Activated CD8-positive, alpha-beta T cell treated with anti-CD3 and anti-CD28 coated beads for 36 hours (primary cell): ENCODE measurements at regions of chr1 and their contacts with region 1.

Region 1: DNA sequence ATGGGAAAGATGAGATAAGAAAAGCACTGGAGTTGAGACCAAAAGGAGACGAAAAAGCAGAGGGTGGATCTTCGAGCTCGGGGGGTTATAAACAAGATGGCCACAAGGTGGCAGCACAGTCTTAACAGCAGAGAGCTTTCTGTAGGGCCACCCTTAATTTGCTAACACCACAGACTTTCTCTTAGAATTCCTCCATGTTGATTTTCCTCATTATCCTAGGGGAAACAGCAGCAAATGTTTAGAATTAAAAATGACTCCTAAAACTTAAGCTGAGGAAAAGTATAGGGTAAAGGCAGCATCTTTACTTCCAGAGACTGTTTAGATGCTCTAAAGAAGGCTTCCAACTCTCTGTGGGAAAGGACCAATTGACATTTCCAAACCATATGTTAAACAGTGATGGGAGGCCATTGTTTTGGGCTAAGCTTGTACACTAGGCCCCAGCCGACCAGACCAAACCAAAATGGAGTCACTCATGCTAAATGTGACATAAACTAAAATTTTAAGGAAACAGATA is 2.5 kb upstream of the APOBEC4 start:
- DNase-seq: peak; percentile 87
- ATAC-seq: no peak
- H3K4me3 Mint-ChIP-seq: no peak overlapping the region
- H3K27ac Mint-ChIP-seq: no peak overlapping the region
- H3K4me1 Mint-ChIP-seq: peaks cover 30% of the 10 kb centered on the region
- H3K27me3 Mint-ChIP-seq: no peaks in the 10 kb centered on the region
- CTCF ChIP-seq: peak; percentile 93

Region 2: DNA sequence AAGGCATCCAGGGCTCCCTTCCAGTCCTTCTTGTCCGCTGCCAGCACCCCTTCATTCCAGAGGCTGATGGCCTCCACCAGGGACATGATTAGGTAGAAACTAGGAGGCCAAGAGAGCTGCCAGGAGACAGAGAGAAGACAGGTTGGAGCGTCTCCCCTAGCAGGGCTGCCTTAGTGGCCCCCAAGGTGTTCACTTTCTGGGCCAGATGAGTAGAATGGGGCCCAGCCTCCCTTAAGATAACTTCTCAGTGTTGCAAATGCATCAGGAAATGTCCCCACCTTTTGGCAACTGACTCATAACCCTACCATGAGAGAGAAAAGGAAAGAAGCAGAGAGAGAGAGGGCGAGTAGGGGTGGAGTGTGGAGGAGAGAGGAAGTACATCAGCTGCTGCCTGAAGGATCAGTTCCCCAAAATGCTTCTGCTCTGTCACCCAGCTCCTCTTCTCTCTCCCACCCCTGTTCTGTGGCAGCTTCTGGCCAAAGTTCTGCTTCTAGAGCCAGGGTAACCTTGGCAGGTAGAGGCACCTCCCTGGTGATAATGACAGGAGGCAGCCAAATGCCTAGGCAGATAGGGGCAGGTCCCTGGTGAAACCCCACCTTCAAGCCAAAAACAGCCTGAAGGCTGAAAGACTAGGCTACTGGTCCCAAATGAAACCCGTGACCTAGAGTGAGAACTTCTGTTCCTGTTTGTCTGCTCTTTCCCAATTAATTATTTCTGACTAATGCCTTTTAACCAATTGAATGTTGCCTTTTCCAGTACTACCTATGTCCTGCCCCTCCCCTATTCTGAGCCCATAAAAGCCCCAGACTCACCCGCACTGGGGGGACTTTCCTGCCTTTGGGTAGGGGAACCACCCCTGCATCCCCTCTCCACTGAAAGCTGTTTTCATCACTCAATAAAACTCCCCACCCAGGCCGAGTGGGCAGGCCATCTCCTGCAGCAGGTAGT is 65.1 kb before region 1 on chr1 and contains the start of gene NCF2:
- CTCF ChIA-PET with region 1: no interaction called
- POLR2A ChIA-PET with region 1: no interaction called
- intact Hi-C with region 1: no loop called
- DNase-seq: peak; percentile 77
- ATAC-seq: peak; percentile 92
- H3K4me3 Mint-ChIP-seq: peak within 1 kb of the TSS; percentile 50
- H3K27ac Mint-ChIP-seq: peak within 1 kb of the TSS; percentile 77
- H3K4me1 Mint-ChIP-seq: peaks cover 43% of the 10 kb centered on the region
- H3K27me3 Mint-ChIP-seq: peaks cover 2% of the 10 kb centered on the region
- CTCF ChIP-seq: no peak
- total RNA-seq, gene NCF2: 4.2 to 4.7 TPM

Region 3: DNA sequence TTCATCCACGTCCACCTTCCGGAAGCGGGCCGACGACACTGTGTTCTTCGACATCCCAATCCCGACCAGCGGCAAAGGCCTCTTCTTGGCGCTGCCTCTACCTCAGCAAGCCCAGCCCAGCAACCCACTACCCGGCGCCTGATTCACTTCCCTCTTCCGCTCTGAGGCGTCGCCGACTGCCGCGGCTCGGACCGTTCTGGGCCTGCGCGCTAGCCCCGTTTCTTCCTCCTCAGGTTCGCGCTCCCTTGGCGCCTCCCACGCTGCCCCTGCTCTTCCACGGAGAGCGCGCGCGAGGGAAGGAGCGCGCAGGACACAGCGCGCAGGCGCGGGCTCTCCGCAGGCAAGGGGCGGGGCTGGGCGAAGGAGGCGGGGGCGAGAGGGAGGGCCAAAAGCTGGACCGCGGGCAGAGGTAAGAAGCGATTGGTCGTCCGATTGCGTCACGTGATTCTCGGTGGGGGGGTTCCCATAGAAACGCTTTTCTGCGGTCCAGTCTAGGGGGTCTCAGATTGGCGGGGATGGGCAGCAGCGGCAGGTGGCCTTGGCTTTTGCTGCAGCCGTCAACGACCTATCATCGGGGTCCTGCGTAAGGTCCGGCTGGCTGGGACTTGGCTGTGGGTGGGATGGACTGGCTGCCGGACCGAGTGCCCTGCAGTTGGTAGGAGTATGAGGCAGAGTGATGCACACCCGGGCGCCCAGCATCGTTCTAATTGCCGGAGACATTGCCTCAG is 19.8 kb before region 1 on chr1 and contains the start of gene ARPC5:
- CTCF ChIA-PET with region 1: interaction called, 33 read pairs
- POLR2A ChIA-PET with region 1: interaction called, 4 read pairs
- intact Hi-C with region 1: no loop called
- DNase-seq: peak; percentile 95
- ATAC-seq: peak; percentile 89
- H3K4me3 Mint-ChIP-seq: peak within 1 kb of the TSS; percentile 89
- H3K27ac Mint-ChIP-seq: peak within 1 kb of the TSS; percentile 98
- H3K4me1 Mint-ChIP-seq: peaks cover 38% of the 10 kb centered on the region
- H3K27me3 Mint-ChIP-seq: no peaks in the 10 kb centered on the region
- CTCF ChIP-seq: no peak
- total RNA-seq, gene ARPC5: 128 to 134 TPM

Region 4: GRCh38 chr1:183676586-183677189 is 21.1 kb after region 1 on chr1:
- CTCF ChIA-PET with region 1: interaction called, 34 read pairs
- POLR2A ChIA-PET with region 1: no interaction called
- intact Hi-C with region 1: no loop called
- DNase-seq: no peak
- ATAC-seq: no peak
- H3K4me3 Mint-ChIP-seq: no peak overlapping the region
- H3K27ac Mint-ChIP-seq: no peak overlapping the region
- H3K4me1 Mint-ChIP-seq: no peaks in the 10 kb centered on the region
- H3K27me3 Mint-ChIP-seq: peaks cover 3% of the 10 kb centered on the region
- CTCF ChIP-seq: no peak

Region 5: GRCh38 chr1:183694066-183694465 is 38.4 kb after region 1 on chr1:
- CTCF ChIA-PET with region 1: interaction called, 21 read pairs
- POLR2A ChIA-PET with region 1: no interaction called
- intact Hi-C with region 1: no loop called
- DNase-seq: no peak
- ATAC-seq: no peak
- H3K4me3 Mint-ChIP-seq: no peak overlapping the region
- H3K27ac Mint-ChIP-seq: no peak overlapping the region
- H3K4me1 Mint-ChIP-seq: peaks cover 19% of the 10 kb centered on the region
- H3K27me3 Mint-ChIP-seq: peaks cover 1% of the 10 kb centered on the region
- CTCF ChIP-seq: no peak

Region 6: GRCh38 chr1:183731980-183732880 is 76.6 kb after region 1 on chr1:
- CTCF ChIA-PET with region 1: no interaction called
- POLR2A ChIA-PET with region 1: no interaction called
- intact Hi-C with region 1: no loop called
- DNase-seq: no peak
- ATAC-seq: no peak
- H3K4me3 Mint-ChIP-seq: no peak overlapping the region
- H3K27ac Mint-ChIP-seq: no peak overlapping the region
- H3K4me1 Mint-ChIP-seq: no peaks in the 10 kb centered on the region
- H3K27me3 Mint-ChIP-seq: no peaks in the 10 kb centered on the region
- CTCF ChIP-seq: no peak

Region 7: GRCh38 chr1:183922197-183922596 is 266.6 kb after region 1 on chr1:
- CTCF ChIA-PET with region 1: interaction called, 19 read pairs
- POLR2A ChIA-PET with region 1: no interaction called
- intact Hi-C with region 1: no loop called
- DNase-seq: no peak
- ATAC-seq: no peak
- H3K4me3 Mint-ChIP-seq: no peak overlapping the region
- H3K27ac Mint-ChIP-seq: no peak overlapping the region
- H3K4me1 Mint-ChIP-seq: no peaks in the 10 kb centered on the region
- H3K27me3 Mint-ChIP-seq: no peaks in the 10 kb centered on the region
- CTCF ChIP-seq: no peak